ENCODE measurements at regions of chr10 and their contacts with region 1.

Region 1: GRCh38 chr10:124221356-124222317 is 128.2 kb upstream of the CHST15 start:
- DNase-seq: no peak
- ATAC-seq: peak; percentile 16
- H3K4me3 Mint-ChIP-seq: peak overlapping the region; percentile 74
- H3K27ac Mint-ChIP-seq: no peak overlapping the region
- H3K4me1 Mint-ChIP-seq: peaks cover 33% of the 10 kb centered on the region
- H3K27me3 Mint-ChIP-seq: no peaks in the 10 kb centered on the region
- CTCF ChIP-seq: no peak

Region 2: DNA sequence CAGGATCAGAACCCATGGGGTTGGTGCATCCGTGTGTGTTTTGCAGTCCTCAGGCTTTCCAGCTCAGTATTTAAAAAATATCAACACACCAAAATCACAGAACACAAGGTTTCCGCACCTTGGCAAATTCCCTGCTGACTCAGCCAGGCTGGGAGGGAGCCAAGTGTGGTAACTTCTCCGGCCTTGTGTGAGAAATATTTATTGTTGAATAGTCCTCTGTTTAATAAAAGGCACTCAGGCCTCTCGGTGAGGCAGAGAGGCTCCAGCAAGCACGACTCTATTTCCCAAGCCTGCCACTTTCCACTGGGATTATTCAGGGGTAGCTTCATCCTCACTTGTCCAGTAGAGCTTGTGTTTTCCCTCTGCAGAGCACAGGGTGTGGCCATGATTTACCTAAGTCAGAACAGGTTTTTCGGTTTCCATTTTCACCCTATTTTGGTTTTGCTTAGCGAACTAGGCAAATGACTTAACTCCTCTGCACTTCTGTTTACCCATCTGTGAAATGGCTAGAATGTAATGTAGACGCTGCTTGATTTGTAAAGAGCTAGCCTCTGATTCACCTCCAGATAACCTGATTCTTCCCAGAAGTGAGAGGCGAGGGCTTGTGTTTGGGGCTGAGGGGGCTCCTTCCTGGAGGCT is 115.3 kb before region 1 on chr10:
- CTCF ChIA-PET with region 1: no interaction called
- POLR2A ChIA-PET with region 1: interaction called, 3 read pairs
- intact Hi-C with region 1: loop called (anchors 5 kb)
- DNase-seq: no peak
- ATAC-seq: peak; percentile 91
- H3K4me3 Mint-ChIP-seq: peak overlapping the region; percentile 69
- H3K27ac Mint-ChIP-seq: peak overlapping the region; percentile 81
- H3K4me1 Mint-ChIP-seq: peaks cover 75% of the 10 kb centered on the region
- H3K27me3 Mint-ChIP-seq: no peaks in the 10 kb centered on the region
- CTCF ChIP-seq: no peak

Region 3: DNA sequence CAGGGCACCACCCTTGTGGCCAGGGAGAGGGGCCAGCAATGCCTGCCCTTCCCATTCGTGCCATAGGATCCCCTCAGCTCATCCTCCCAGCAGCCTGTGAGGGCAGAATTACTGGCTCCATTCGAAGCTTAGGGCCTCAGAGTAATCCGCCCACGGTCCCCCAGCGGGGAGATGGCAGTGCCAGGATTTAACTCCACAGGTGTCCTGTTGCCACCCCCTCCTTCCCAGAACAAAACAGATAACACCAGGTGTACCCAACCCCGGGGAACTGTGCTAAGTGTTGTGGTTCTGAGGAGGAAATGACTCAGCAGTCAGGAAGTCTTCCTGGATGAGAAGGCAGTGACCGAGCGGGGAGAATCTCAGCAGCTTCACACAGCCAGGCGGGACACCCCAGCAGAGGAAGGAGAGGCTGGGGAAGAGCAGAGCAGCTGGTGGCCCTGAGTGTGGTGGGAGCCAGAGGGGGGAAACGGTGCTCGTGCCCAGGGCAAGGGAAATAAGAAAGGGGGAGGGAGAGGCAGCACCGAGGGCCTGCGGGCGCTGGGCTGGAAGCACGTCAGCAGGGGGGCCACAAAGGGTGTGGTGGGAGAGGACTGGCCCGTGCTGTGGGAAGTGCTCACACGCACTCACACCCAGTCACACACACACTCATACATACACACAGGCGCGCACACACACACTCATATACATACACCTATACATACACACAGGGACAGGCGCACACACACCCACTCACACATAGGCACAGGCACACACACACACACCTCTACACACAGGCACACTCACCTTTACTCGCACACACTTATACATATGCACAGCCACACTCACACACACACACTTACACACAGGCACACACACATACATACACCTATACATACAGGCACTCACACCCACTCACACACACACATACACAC is 68.5 kb before region 1 on chr10:
- CTCF ChIA-PET with region 1: no interaction called
- POLR2A ChIA-PET with region 1: no interaction called
- intact Hi-C with region 1: loop called (anchors 2 kb)
- DNase-seq: peak; percentile 28
- ATAC-seq: peak; percentile 68
- H3K4me3 Mint-ChIP-seq: no peak overlapping the region
- H3K27ac Mint-ChIP-seq: no peak overlapping the region
- H3K4me1 Mint-ChIP-seq: peaks cover 16% of the 10 kb centered on the region
- H3K27me3 Mint-ChIP-seq: no peaks in the 10 kb centered on the region
- CTCF ChIP-seq: no peak

Region 4: DNA sequence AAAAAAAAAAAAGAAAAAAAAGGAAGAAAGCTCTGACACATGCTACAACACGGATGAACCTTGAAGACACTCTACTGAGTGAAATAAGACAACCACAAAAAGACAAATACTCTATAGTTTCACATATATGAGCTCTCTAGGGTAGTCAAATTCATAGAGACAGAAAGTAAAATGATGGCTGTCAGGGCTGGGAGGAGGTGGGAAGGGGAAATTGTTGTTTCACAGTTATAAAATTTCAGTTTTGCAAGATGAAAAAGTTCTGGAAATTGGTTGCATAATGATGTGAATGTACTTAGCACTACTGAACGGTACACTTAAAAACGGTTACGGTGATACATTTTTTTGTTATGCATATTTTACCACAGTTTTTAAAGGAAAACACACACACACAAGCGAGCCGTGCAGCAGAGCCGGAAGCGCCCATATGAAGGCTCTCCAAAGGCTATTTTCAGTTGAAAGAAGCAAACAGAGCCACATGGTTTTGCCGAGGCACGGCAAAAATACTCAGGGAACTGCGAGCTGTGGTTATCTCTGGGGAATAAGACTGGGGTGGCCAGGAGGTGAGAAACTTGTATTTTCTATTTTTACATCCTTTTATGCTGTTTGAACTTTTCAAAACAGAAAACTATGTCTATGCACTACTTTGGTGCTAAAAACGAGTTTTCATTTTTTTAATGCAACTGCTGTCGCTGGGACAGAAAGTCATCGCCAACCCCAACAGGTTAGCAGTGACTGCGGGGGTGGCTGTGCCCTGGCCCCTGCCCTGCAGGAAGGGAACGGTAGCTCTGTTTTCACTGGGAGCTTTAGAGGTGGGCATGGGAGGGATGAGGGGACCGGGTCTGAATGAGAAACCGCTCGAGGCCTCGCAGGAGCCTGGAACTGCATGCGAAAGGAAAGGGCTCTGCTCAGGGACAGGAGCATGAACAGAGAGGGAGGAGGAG is 64.2 kb after region 1 on chr10:
- CTCF ChIA-PET with region 1: no interaction called
- POLR2A ChIA-PET with region 1: no interaction called
- intact Hi-C with region 1: no loop called
- DNase-seq: peak; percentile 9
- ATAC-seq: peak; percentile 40
- H3K4me3 Mint-ChIP-seq: peak overlapping the region; percentile 58
- H3K27ac Mint-ChIP-seq: no peak overlapping the region
- H3K4me1 Mint-ChIP-seq: peaks cover 19% of the 10 kb centered on the region
- H3K27me3 Mint-ChIP-seq: peaks cover 3% of the 10 kb centered on the region
- CTCF ChIP-seq: no peak

Region 5: GRCh38 chr10:124340033-124340760 is 118.6 kb after region 1 on chr10:
- CTCF ChIA-PET with region 1: no interaction called
- POLR2A ChIA-PET with region 1: no interaction called
- intact Hi-C with region 1: no loop called
- DNase-seq: no peak
- ATAC-seq: no peak
- H3K4me3 Mint-ChIP-seq: no peak overlapping the region
- H3K27ac Mint-ChIP-seq: no peak overlapping the region
- H3K4me1 Mint-ChIP-seq: peaks cover 17% of the 10 kb centered on the region
- H3K27me3 Mint-ChIP-seq: no peaks in the 10 kb centered on the region
- CTCF ChIP-seq: no peak

Measured in activated B cell treated with CpG ODN at 0.5 μM for 24 hours (primary cell).